Activated T-helper 1 cell treated with anti-CD3 and anti-CD28 coated beads, Interleukin-12 subunit alpha, Interleukin-12 subunit beta, Interleukin-2, Interleukin-4 antibody, amounts not matched to agents 30 ng/mL and 10 ng/mL and 1 ng/mL, durations not matched to agents 14 hours and 24 hours and 36 hours (primary cell): ENCODE measurements at regions of chr4 and their contacts with region 1.

Region 1: GRCh38 chr4:150297861-150298474 is 219.7 kb downstream of the DCLK2 start:
- DNase-seq: no peak
- H3K4me3 Mint-ChIP-seq: no peak overlapping the region
- H3K27ac Mint-ChIP-seq: no peak overlapping the region
- H3K4me1 Mint-ChIP-seq: peaks cover 18% of the 10 kb centered on the region
- H3K27me3 Mint-ChIP-seq: no peaks in the 10 kb centered on the region

Region 2: DNA sequence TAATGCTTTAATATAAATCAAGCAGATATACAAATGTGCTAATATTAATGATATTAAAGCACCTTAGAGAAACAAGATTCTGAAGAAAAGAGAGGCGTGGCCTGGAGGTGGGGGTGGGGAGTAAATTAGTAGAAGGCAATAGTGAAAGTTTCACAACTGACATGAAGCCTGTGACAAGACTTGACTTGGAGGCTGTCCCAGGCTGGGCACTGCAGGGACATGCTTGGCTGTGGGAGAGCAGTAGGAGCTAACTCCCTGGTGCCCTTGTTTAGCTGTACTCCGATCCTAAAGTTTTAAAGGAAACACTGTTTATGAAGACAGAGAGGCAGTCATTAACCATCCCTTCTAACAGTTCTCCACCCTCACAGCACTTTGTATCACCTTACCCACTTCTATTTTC is 45.0 kb after region 1 on chr4:
- intact Hi-C with region 1: no loop called
- DNase-seq: no peak
- H3K4me3 Mint-ChIP-seq: no peak overlapping the region
- H3K27ac Mint-ChIP-seq: no peak overlapping the region
- H3K4me1 Mint-ChIP-seq: no peaks in the 10 kb centered on the region
- H3K27me3 Mint-ChIP-seq: no peaks in the 10 kb centered on the region

Region 3: GRCh38 chr4:150436598-150437370 is 138.8 kb after region 1 on chr4:
- intact Hi-C with region 1: loop called (anchors 1 kb)
- DNase-seq: no peak
- H3K4me3 Mint-ChIP-seq: no peak overlapping the region
- H3K27ac Mint-ChIP-seq: peak overlapping the region; percentile 1
- H3K4me1 Mint-ChIP-seq: peaks cover 13% of the 10 kb centered on the region
- H3K27me3 Mint-ChIP-seq: no peaks in the 10 kb centered on the region

Region 4: GRCh38 chr4:150593996-150594395 is 296.0 kb after region 1 on chr4:
- intact Hi-C with region 1: loop called (anchors 10 kb)
- DNase-seq: no peak
- H3K4me3 Mint-ChIP-seq: no peak overlapping the region
- H3K27ac Mint-ChIP-seq: no peak overlapping the region
- H3K4me1 Mint-ChIP-seq: no peaks in the 10 kb centered on the region
- H3K27me3 Mint-ChIP-seq: no peaks in the 10 kb centered on the region

Region 5: DNA sequence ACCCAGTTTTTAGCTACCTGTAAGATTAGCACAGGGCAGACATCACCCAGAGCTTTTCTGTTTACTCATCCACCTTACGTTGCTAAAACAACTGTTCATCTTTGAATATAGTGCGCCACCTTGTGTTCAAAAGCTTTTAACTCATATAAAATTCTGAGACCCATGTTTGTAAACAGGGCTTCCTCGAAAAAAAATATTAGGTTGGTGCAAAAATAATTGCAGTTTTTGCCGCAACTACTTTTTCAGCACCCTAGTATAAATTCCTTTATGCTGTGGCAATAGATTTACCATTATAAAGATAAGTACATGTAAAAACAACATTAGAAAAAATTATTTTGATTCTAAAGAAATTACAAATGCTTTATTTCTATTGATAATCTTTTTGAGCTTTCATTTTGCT is 569.2 kb after region 1 on chr4:
- intact Hi-C with region 1: loop called (anchors 1 kb)
- DNase-seq: peak; percentile 15
- H3K4me3 Mint-ChIP-seq: no peak overlapping the region
- H3K27ac Mint-ChIP-seq: no peak overlapping the region
- H3K4me1 Mint-ChIP-seq: no peaks in the 10 kb centered on the region
- H3K27me3 Mint-ChIP-seq: no peaks in the 10 kb centered on the region

Region 6: DNA sequence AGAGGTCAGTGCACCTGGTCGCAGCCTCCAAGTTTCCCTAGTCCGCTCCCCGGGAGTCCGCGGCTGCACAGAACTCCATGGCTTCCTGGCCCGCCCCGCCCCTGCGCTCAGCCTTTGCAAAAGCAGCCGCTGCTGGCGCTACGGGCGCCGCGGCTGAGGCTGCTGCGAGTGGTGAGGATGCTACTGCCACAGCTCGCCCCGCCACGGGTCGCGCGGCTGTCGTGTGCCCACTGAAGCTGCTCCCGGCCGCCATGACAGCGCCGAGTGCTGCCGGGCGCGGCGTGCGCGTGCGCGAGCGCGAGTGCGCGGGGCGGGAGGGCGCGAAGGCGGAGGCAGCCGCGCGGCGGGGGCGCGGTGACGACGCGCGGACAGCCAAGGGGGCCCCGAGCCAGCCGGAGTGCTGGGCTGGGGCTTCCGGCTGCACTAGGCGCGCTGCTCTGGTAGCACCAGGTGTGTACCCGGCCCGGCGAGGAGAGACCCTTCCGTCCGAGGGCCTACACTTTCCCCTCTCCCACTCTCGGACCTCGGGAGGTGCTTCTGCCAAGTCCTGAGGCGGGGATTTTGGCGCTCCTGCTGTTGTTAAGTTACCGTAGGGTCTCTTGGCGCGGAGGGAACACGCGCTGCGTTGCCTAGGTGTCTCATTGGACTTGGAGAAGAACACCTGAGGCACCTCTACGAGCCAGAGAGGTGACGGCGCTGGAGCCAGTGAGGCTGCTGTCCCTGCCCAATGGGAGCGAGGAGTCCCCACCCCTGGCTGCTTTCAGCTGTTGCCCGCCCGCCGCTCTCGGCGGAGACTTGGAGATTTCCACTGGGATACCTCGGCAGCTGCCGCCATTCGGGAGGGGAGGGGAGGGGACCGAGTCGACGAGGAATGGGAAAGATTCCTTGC is 717.7 kb after region 1 on chr4:
- intact Hi-C with region 1: loop called (anchors 1 kb)
- DNase-seq: peak; percentile 79
- H3K4me3 Mint-ChIP-seq: peak overlapping the region; percentile 100
- H3K27ac Mint-ChIP-seq: peak overlapping the region; percentile 99
- H3K4me1 Mint-ChIP-seq: peaks cover 34% of the 10 kb centered on the region
- H3K27me3 Mint-ChIP-seq: no peaks in the 10 kb centered on the region